ENCODE measurements at regions of chr1 and their contacts with region 1.

Region 1: GRCh38 chr1:226634166-226634588 is 85.6 kb downstream of the STUM start:
- DNase-seq: peak; percentile 73 to 89 (median 79)
- H3K4me3 ChIP-seq: no peak overlapping the region
- H3K4me3 Mint-ChIP-seq: peak overlapping the region in 4 of 7 donors; percentile 0 to 60 (median 32)
- H3K27ac ChIP-seq: no peak overlapping the region
- H3K27ac Mint-ChIP-seq: peak overlapping the region; percentile 3 to 90 (median 75)
- H3K4me1 ChIP-seq: peaks cover 48% of the 10 kb centered on the region
- H3K4me1 Mint-ChIP-seq: peaks cover 42 to 61% (median 50%) of the 10 kb centered on the region in 3 donors
- H3K27me3 ChIP-seq: no peaks in the 10 kb centered on the region
- H3K27me3 Mint-ChIP-seq: no peaks in the 10 kb centered on the region

Region 2: DNA sequence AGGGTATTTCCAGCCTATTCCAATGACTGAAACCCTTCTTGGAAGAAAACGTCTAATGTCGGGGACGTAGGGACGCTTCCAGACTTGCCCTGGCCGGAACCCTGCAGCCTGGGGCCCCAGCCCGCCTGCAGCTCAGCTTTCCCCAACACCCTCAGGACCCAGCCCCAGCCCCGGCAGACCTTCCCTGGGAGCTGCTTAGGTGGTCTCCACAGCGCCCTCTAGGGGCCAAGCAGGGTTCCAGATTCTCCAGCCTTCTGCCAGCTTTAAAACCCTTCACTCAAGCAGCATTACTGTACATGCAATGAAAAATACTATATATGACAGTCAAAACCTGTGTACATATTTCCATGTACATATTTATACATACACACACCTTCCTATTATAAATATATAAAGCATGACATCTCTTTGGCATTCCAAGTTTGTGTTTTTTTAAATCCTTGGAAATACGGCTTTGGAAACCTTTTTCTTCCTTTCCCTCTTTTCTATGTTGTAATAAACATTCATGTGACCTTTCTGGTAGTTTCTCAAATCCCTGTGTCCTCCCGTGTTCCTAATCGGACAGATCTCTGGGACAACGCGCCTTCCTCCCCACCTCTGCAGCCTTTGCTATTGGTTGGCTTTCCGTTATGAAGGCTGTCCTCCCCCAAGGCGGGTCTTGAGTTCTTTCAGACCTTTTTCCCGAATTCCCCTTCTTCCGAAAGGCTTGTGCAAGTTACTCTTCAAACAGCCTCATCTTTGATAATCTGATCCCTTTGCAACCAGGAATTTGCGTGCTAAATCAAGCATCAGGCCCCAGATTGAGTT is 25.3 kb before region 1 on chr1:
- CTCF ChIA-PET with region 1: no interaction called
- POLR2A ChIA-PET with region 1: no interaction called
- DNase-seq: peak; percentile 52 to 78 (median 61)
- H3K4me3 ChIP-seq: no peak overlapping the region
- H3K4me3 Mint-ChIP-seq: peak overlapping the region in 1 of 7 donors; percentile 43
- H3K27ac ChIP-seq: no peak overlapping the region
- H3K27ac Mint-ChIP-seq: peak overlapping the region in 1 of 8 donors; percentile 13
- H3K4me1 ChIP-seq: no peaks in the 10 kb centered on the region
- H3K4me1 Mint-ChIP-seq: no peaks in the 10 kb centered on the region
- H3K27me3 ChIP-seq: no peaks in the 10 kb centered on the region
- H3K27me3 Mint-ChIP-seq: peaks cover 8 to 10% of the 10 kb centered on the region in 2 donors

Region 3: GRCh38 chr1:226662642-226663326 is 28.6 kb after region 1 on chr1:
- CTCF ChIA-PET with region 1: interaction called, 14 read pairs
- POLR2A ChIA-PET with region 1: interaction called, 3 read pairs
- DNase-seq: peak; percentile 80 to 96 (median 87)
- H3K4me3 ChIP-seq: peak overlapping the region; percentile 20
- H3K4me3 Mint-ChIP-seq: peak overlapping the region; percentile 60 to 79 (median 70)
- H3K27ac ChIP-seq: peak overlapping the region; percentile 66
- H3K27ac Mint-ChIP-seq: peak overlapping the region in 7 of 8 donors; percentile 89 to 99 (median 98)
- H3K4me1 ChIP-seq: peaks cover 48% of the 10 kb centered on the region
- H3K4me1 Mint-ChIP-seq: peaks cover 0 to 93% (median 90%) of the 10 kb centered on the region in 3 donors
- H3K27me3 ChIP-seq: no peaks in the 10 kb centered on the region
- H3K27me3 Mint-ChIP-seq: no peaks in the 10 kb centered on the region

Region 4: GRCh38 chr1:226679853-226680516 is 45.8 kb after region 1 on chr1:
- CTCF ChIA-PET with region 1: interaction called, 49 read pairs
- POLR2A ChIA-PET with region 1: interaction called, 3 read pairs
- DNase-seq: peak; percentile 69 to 89 (median 78)
- H3K4me3 ChIP-seq: peak overlapping the region; percentile 38
- H3K4me3 Mint-ChIP-seq: peak overlapping the region; percentile 52 to 91 (median 84)
- H3K27ac ChIP-seq: peak overlapping the region; percentile 72
- H3K27ac Mint-ChIP-seq: peak overlapping the region; percentile 94 to 99 (median 98)
- H3K4me1 ChIP-seq: peaks cover 99% of the 10 kb centered on the region
- H3K4me1 Mint-ChIP-seq: peaks cover 97 to 100% (median 99%) of the 10 kb centered on the region in 3 donors
- H3K27me3 ChIP-seq: no peaks in the 10 kb centered on the region
- H3K27me3 Mint-ChIP-seq: peaks cover 0 to under 1% of the 10 kb centered on the region in 2 donors

Region 5: DNA sequence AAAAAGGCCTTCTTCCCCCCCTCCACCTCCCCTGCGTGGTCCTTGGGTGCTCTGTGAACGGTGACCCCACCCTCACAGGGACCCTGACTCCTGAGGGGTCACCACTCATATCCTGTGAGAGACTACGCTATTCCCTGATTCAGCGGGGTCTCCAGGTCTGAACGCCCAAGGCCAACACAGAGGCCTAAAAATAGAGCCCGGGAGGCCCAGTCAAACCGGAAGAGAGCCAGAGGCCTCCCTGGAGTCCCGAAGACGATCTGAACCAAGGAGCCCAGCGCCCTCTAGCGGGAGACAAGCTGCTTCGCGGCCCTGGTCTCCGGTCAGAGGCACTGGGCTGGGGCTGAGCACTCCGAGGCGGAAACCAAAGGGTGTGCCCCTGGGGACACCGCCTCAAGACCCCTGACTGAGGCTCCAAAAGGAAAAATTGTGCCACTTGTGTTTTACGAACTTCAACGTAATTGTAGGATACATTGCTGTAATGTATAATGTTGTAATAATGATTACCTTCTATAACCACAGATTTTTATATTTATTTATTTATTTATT is 193.9 kb after region 1 on chr1:
- CTCF ChIA-PET with region 1: interaction called, 47 read pairs
- POLR2A ChIA-PET with region 1: interaction called, 4 read pairs
- DNase-seq: peak; percentile 87 to 96 (median 92)
- H3K4me3 ChIP-seq: peak overlapping the region; percentile 20
- H3K4me3 Mint-ChIP-seq: peak overlapping the region in 6 of 7 donors; percentile 29 to 81 (median 64)
- H3K27ac ChIP-seq: peak overlapping the region; percentile 59
- H3K27ac Mint-ChIP-seq: peak overlapping the region in 6 of 8 donors; percentile 41 to 93 (median 88)
- H3K4me1 ChIP-seq: peaks cover 11% of the 10 kb centered on the region
- H3K4me1 Mint-ChIP-seq: peaks cover 14 to 16% (median 15%) of the 10 kb centered on the region in 3 donors
- H3K27me3 ChIP-seq: no peaks in the 10 kb centered on the region
- H3K27me3 Mint-ChIP-seq: peaks cover 0 to 5% of the 10 kb centered on the region in 2 donors